ENCODE measurements at regions of chr3 and their contacts with region 1.

Region 1: DNA sequence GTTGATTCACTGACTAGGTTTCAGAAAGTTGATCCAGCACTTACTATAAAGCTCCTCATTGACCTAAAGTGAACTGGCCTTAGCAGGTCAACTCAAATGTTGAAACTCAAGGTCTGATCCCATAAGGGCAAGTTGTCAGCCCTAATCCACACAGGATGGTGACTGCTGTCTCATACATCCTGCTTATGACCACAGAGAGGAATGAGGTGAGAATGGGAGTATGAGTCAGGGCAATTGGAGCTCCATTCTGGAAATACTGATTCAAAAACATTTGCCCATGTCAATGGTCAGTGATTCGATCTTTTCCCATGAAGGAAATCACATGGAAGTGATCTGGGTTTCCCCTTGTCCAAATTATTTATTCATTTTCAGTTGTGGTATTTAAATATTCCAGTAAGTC is 78.7 kb downstream of the ZNF385D start:
- DNase-seq: no peak

Region 2: GRCh38 chr3:21621181-21621651 is 51.1 kb before region 1 on chr3:
- intact Hi-C with region 1: no loop called
- DNase-seq: no peak

Region 3: GRCh38 chr3:21634112-21634511 is 38.2 kb before region 1 on chr3:
- intact Hi-C with region 1: loop called (anchors 5 kb)
- DNase-seq: no peak

Region 4: GRCh38 chr3:21888656-21889055 is 216.4 kb after region 1 on chr3:
- intact Hi-C with region 1: no loop called
- DNase-seq: no peak

Region 5: GRCh38 chr3:22175947-22176346 is 503.6 kb after region 1 on chr3:
- intact Hi-C with region 1: no loop called
- DNase-seq: no peak

Measured in cardiac septum (tissue), 1 donor.